WTC11 (cell line): ENCODE measurements at regions of chr6 and their contacts with region 1.

Region 1: DNA sequence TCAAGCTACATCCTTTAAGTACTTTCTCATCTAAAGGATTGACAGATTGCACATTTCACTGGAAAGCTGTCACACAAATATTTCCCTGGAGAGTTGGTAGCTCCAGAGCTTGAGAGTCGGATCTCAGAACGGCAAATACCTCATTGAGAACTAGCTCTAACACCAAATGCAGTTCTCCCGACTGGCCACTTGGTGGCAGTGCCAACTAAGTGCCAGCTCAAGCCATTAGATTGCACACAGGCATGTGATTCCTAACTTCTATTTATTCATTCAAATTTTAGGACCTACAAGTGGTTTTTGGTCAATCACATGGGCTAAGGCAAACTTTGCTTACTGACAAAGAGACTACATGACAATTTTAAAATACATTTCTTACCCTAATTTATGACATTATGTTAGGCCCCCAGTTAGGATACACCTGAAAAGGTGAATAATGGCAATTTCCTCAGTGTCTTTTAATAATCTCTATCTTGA is 7.9 kb upstream of the MCHR2 start:
- DNase-seq: peak; percentile 48
- ATAC-seq: peak; percentile 92
- H3K4me3 Mint-ChIP-seq: no peak overlapping the region
- H3K27ac Mint-ChIP-seq: no peak overlapping the region
- H3K4me1 Mint-ChIP-seq: no peaks in the 10 kb centered on the region
- H3K27me3 Mint-ChIP-seq: no peaks in the 10 kb centered on the region; the same call in 1 of the 2 replicates
- CTCF ChIP-seq: peak; percentile 83

Region 2: DNA sequence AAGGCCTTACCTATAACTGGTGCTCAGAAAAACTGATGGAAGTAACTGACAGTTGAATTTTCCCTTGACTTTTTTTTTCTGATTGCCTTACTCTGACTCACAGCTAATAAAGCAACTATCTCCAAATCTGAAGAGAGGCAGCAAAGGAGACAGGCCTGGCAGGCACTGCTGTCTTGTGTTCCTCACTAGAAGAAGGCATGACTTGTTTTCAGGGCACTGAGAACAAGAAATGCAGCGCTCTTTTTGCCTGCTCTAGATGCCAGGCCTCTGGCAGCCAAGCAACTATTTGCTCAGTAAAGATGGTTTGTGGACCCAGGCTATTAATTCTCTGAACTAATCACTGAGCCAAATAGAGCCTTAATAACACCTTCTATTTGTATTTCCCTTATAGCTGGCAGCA is 240.2 kb before region 1 on chr6:
- CTCF ChIA-PET with region 1: no interaction called
- POLR2A ChIA-PET with region 1: no interaction called
- DNase-seq: no peak
- ATAC-seq: no peak
- H3K4me3 Mint-ChIP-seq: no peak overlapping the region
- H3K27ac Mint-ChIP-seq: no peak overlapping the region
- H3K4me1 Mint-ChIP-seq: no peaks in the 10 kb centered on the region
- H3K27me3 Mint-ChIP-seq: no peaks in the 10 kb centered on the region
- CTCF ChIP-seq: no peak

Region 3: DNA sequence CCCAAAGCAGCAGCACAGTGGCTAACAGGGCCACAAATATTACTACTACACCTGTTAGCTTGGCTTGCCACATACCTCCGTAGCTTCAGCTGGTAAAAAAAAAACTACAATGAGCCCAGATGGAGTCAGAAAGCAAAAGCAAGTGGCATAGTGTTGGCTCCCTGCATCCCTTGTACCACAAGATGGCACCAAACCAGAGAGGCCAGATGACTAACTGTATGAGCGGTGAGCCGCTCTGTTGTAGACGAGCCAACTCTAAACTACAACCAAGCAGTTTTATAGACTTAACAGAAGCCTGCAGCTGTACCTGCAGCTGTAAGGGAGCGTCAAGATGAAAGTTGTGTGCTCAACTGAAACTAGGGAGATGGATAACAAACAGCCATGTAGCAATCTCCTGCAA is 76.6 kb after region 1 on chr6:
- CTCF ChIA-PET with region 1: interaction called, 14 read pairs
- POLR2A ChIA-PET with region 1: no interaction called
- DNase-seq: peak; percentile 46
- ATAC-seq: peak; percentile 100
- H3K4me3 Mint-ChIP-seq: no peak overlapping the region
- H3K27ac Mint-ChIP-seq: no peak overlapping the region
- H3K4me1 Mint-ChIP-seq: no peaks in the 10 kb centered on the region
- H3K27me3 Mint-ChIP-seq: no peaks in the 10 kb centered on the region; the same call in 1 of the 2 replicates
- CTCF ChIP-seq: no peak

Region 4: GRCh38 chr6:100099189-100100074 is 97.5 kb after region 1 on chr6:
- CTCF ChIA-PET with region 1: interaction called, 47 read pairs
- POLR2A ChIA-PET with region 1: no interaction called
- DNase-seq: no peak
- ATAC-seq: peak; percentile 34; the same call in 1 of the 2 replicates
- H3K4me3 Mint-ChIP-seq: no peak overlapping the region
- H3K27ac Mint-ChIP-seq: no peak overlapping the region
- H3K4me1 Mint-ChIP-seq: peaks cover 4% of the 10 kb centered on the region
- H3K27me3 Mint-ChIP-seq: no peaks in the 10 kb centered on the region
- CTCF ChIP-seq: no peak; the same call in 1 of the 2 replicates

Region 5: DNA sequence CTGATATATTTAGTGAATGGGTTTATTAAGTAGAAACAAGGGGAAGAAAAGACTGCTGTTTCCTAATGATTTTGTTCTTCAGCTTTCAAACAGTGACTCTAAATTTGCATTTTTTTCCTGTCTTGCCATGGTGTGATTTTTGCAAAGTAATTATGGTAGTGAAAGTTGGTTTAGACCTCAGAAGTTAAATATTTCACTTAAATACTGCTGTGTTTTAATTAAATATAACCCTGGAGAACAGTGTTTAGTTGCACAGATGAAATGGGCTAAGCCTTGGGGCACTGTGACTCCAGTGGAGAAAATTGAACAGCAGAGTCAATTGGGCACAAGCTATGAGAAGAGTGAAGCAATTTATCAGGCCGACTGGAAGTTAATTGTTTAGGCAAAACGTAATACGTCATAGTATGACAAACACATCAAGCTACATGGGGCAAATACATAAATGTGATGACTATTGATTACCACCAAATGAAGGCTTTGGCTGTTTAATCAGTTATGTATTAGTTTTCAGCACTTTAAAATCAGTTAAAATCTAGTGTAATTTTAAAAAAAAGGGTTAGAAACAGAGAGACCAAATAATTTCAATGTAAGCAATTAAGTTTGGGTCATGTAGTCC is 103.3 kb after region 1 on chr6:
- CTCF ChIA-PET with region 1: interaction called, 47 read pairs
- POLR2A ChIA-PET with region 1: no interaction called
- DNase-seq: no peak
- ATAC-seq: no peak
- H3K4me3 Mint-ChIP-seq: no peak overlapping the region
- H3K27ac Mint-ChIP-seq: no peak overlapping the region
- H3K4me1 Mint-ChIP-seq: peaks cover 17% of the 10 kb centered on the region
- H3K27me3 Mint-ChIP-seq: no peaks in the 10 kb centered on the region
- CTCF ChIP-seq: no peak

Region 6: GRCh38 chr6:100446115-100447080 is 444.4 kb after region 1 on chr6:
- CTCF ChIA-PET with region 1: no interaction called
- POLR2A ChIA-PET with region 1: no interaction called
- DNase-seq: no peak
- ATAC-seq: peak; percentile 38
- H3K4me3 Mint-ChIP-seq: no peak overlapping the region
- H3K27ac Mint-ChIP-seq: no peak overlapping the region
- H3K4me1 Mint-ChIP-seq: peaks cover 14% of the 10 kb centered on the region
- H3K27me3 Mint-ChIP-seq: peaks cover 10% of the 10 kb centered on the region
- CTCF ChIP-seq: no peak